Right cardiac atrium (tissue), 5 donors: ENCODE measurements at regions of chr1 and their contacts with region 1.

Region 1: DNA sequence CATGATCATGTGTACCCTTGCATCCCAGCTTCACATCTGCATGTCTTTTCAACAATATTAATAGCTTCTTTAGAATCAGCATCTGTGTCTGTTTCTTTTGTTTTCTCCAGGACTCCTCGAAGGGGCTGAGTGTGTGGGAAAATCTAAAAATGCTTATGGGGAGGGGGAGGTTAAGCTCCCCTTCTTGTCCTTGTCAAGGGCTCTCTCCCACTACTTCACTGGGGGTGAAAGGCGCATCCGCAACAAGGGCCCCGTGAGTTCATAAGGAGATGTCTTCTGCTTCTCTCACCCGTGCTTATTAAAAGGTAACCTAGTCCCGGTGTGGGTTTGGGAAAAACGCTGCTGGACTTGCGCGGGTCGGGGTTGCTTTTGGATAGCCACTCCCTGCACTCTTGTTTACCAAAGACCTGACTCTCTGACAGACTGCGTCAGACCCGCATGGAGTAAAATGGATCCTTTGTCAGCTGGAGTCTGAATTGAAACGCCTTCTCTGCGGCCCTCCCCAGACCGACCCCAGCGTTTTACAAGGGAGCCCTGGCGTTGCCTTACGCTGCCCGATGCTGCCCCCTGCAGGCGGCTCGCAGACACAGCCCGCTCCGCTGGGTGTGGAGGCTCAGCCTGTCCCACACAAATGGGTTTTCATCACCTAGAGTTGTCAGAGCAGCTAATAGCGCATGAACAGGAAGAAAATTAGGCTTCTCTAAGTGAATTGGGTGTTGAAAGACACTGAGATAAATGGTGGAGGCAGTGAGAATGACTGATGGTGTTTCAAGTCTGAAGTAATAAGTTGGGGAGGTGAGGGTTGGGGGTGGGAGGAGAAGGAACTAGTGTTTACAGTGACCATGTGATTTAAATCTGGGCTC is 53.8 kb downstream of the IER5 start:
- DNase-seq: peak; percentile 85 to 96 (median 93)
- ATAC-seq: peak; percentile 97
- H3K4me3 ChIP-seq: no peak overlapping the region
- H3K27ac ChIP-seq: no peak overlapping the region
- H3K4me1 ChIP-seq: peaks cover 2% of the 10 kb centered on the region
- H3K27me3 ChIP-seq: no peaks in the 10 kb centered on the region

Region 2: GRCh38 chr1:180881806-180882509 is 260.4 kb before region 1 on chr1:
- intact Hi-C with region 1: loop called in 3 of 4 experiments (anchors 5 to 10 kb)
- DNase-seq: no peak
- ATAC-seq: peak; percentile 69 to 74
- H3K4me3 ChIP-seq: no peak overlapping the region
- H3K27ac ChIP-seq: no peak overlapping the region
- H3K4me1 ChIP-seq: no peaks in the 10 kb centered on the region
- H3K27me3 ChIP-seq: no peaks in the 10 kb centered on the region

Region 3: DNA sequence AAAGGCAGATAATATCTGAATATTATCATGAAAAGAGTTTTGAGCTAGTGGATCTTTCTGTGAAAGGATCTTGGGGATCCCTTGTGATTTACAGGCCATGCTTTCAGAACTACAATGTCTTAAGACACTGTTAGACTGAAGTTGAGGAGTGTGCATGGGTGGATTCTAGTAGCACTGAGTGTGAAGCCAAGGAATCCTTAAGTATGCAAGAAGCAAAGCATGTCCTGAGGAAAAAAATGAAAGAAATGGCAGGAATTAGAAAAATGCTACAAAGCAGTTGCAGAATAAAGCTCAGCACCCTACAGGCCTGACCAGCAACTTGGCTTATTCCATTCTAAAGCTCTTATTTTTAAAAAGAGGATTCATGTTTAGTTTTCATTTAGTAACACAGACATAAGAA is 131.5 kb before region 1 on chr1:
- intact Hi-C with region 1: no loop called
- DNase-seq: no peak
- ATAC-seq: no peak
- H3K4me3 ChIP-seq: no peak overlapping the region
- H3K27ac ChIP-seq: no peak overlapping the region
- H3K4me1 ChIP-seq: peaks cover 2% of the 10 kb centered on the region
- H3K27me3 ChIP-seq: no peaks in the 10 kb centered on the region

Region 4: DNA sequence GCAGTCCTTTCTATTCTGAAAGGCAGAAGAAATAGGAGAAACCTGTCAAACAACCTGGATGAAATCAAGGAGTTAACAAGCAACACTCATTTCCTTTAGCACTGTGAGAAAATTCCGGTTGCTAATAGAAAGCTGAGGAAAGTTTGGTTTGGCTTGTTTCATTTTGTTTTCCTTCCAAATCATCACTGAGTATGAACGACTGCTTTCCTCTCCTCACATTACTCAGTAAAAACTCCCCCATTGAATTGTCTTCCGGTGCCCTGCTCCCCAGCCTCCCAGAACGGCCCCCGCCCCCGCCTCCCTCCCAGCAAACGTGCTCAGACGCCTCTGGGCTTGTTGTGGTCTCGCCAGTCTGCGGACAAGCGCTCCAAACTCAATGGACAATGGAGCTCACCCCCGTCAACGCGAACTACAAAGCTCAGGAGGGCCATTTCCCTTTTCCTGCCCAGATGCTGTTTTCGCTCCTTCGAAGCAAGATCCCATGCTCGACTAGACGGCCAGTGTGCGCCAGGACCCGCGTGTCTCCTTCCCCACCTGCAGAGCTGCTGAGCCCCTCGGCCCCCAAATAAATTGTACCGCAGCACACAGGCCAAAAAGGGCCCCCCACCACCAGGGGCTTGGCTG is 120.4 kb before region 1 on chr1:
- intact Hi-C with region 1: loop called in 1 of 4 experiments (anchors 5 kb)
- DNase-seq: peak; percentile 60 to 83 (median 83)
- ATAC-seq: peak; percentile 67 to 83
- H3K4me3 ChIP-seq: peak overlapping the region; percentile 76
- H3K27ac ChIP-seq: peak overlapping the region; percentile 85
- H3K4me1 ChIP-seq: no peaks in the 10 kb centered on the region
- H3K27me3 ChIP-seq: no peaks in the 10 kb centered on the region

Region 5: GRCh38 chr1:181033799-181034451 is 108.4 kb before region 1 on chr1 and contains the start of gene MR1:
- intact Hi-C with region 1: loop called in 2 of 4 experiments (anchors 2 to 5 kb)
- DNase-seq: no peak
- ATAC-seq: peak; percentile 93 to 94
- H3K4me3 ChIP-seq: peak within 1 kb of the TSS; percentile 64
- H3K27ac ChIP-seq: peak within 1 kb of the TSS; percentile 93
- H3K4me1 ChIP-seq: peaks cover 9% of the 10 kb centered on the region
- H3K27me3 ChIP-seq: no peaks in the 10 kb centered on the region
- total RNA-seq, gene MR1: 9.0 to 16.1 (median 12.2) TPM

Region 6: DNA sequence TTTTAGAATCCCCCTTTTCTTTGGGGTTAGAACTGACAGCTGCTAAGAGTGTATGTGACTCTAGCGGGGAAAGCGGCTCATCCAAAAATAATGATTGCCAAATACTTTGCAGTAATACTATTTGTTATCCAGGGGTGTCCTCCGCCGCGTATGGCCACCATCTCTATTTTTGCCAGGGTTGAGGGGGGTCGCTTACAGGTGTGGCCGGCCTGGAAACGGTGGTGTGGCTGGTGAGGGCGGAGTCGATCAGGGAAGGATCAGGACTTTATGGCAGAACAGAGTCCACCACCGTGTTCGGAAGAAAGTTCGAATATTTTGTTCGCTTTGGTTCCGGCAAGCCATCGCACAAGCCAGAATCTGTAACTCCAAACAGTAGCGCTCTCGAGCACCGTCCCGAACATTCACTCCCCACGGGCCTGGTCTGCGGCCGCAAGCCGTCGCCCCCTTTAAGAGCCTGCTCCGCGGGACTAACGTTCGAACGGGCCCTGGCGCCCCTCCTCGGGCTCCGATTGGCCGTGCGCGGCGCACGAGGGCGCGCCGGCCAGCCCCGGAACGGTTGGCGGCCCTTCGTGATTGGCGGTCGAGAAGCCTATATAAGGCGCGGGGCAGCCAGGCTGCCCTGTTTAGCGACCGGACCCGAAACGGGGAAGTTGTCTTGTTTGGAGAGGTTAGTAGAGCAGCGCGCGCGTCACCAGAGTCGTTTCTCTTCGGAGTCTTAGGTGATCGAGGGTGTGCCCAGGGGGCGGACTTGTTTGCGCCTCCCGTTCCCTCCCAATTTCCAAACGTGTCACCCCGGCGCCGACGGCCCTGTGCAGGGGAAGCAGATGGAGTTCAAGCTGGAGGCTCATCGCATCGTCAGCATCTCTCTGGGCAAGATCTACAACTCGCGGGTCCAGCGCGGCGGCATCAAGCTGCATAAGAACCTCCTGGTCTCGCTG is 54.0 kb before region 1 on chr1 and contains the start of gene IER5:
- intact Hi-C with region 1: loop called (anchors 2 to 5 kb)
- DNase-seq: peak; percentile 95 to 97 (median 96)
- ATAC-seq: peak; percentile 93 to 94
- H3K4me3 ChIP-seq: peak within 1 kb of the TSS; percentile 70
- H3K27ac ChIP-seq: peak within 1 kb of the TSS; percentile 87
- H3K4me1 ChIP-seq: no peaks in the 10 kb centered on the region
- H3K27me3 ChIP-seq: no peaks in the 10 kb centered on the region
- total RNA-seq, gene IER5: 21.9 to 32.6 (median 28.2) TPM